Activated naive CD4-positive, alpha-beta T cell treated with anti-CD3 and anti-CD28 coated beads, Interleukin-2, amount 10 ng/mL, durations not matched to agents 7 days and 5 days (primary cell): ENCODE measurements at regions of chr2 and their contacts with region 1.

Region 1: GRCh38 chr2:47402805-47403608 is at the start of gene MSH2:
- DNase-seq: peak; percentile 95
- H3K4me3 Mint-ChIP-seq: peak within 1 kb of the TSS; percentile 95
- H3K27ac Mint-ChIP-seq: peak within 1 kb of the TSS; percentile 94
- H3K4me1 Mint-ChIP-seq: peaks cover 33% of the 10 kb centered on the region
- H3K27me3 Mint-ChIP-seq: no peaks in the 10 kb centered on the region

Region 2: DNA sequence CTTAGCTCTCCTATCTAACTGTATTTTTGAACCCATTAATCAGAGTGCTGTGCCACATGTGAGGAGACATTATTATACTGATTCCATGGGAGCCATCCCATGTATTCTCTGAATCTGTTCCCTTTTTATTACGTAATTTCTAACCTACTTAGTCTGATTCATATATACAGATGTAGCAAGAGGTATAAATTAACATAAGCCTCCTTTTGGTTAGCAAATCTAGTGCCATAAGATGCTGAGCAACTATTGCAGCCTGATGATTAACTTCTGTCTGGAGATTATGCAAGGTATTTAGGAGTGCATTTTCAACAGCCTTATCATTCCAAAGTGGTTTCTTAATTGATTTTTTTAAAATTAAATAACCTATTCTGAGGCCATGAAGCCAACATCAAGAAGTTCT is 114.1 kb before region 1 on chr2:
- CTCF ChIA-PET with region 1: no interaction called
- DNase-seq: no peak
- H3K4me3 Mint-ChIP-seq: no peak overlapping the region
- H3K27ac Mint-ChIP-seq: no peak overlapping the region
- H3K4me1 Mint-ChIP-seq: no peaks in the 10 kb centered on the region
- H3K27me3 Mint-ChIP-seq: peaks cover 3% of the 10 kb centered on the region

Region 3: GRCh38 chr2:47386551-47386950 is 16.5 kb before region 1 on chr2:
- CTCF ChIA-PET with region 1: interaction called, 11 read pairs
- DNase-seq: no peak
- H3K4me3 Mint-ChIP-seq: no peak overlapping the region
- H3K27ac Mint-ChIP-seq: no peak overlapping the region
- H3K4me1 Mint-ChIP-seq: no peaks in the 10 kb centered on the region
- H3K27me3 Mint-ChIP-seq: peaks cover 31% of the 10 kb centered on the region

Region 4: GRCh38 chr2:47528874-47529273 is 125.9 kb after region 1 on chr2:
- CTCF ChIA-PET with region 1: no interaction called
- DNase-seq: no peak
- H3K4me3 Mint-ChIP-seq: no peak overlapping the region
- H3K27ac Mint-ChIP-seq: no peak overlapping the region
- H3K4me1 Mint-ChIP-seq: no peaks in the 10 kb centered on the region
- H3K27me3 Mint-ChIP-seq: peaks cover 9% of the 10 kb centered on the region